A673 (cell line): ENCODE measurements at regions of chr19 and their contacts with region 1.

Region 1: DNA sequence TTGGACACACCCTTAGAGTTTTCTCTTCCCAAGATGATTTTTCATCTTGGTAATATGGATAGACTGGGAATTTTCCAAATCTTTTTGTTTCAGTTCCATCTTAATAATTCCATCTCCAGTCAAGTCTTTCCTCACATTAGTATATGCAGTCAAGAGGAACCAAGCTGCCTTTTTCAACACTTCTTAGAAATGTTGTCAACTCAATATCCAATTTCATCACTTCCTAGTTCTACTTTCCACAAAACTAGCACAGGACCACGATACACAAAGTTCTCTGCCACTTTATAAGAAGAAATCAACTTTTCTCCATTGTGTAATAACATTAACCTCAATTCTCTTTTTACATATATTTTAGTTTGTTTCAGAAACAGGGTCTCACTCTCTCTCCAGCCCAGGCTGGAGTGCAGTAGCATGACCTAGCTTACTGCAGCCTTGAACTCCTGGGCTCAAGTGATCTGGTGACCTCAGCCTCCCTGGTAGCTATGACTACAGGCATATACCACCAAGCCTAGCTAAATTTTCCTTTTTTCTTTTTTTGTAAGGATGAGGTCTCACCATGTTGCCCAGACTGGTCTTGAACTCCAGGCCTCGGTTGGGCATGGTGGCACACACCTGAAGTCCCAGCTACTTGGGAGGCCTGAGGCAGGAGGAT is 15.5 kb downstream of the ZNF443 start:
- DNase-seq: no peak
- H3K4me3 ChIP-seq: no peak overlapping the region
- H3K27ac ChIP-seq: no peak overlapping the region
- H3K4me1 ChIP-seq: no peaks in the 10 kb centered on the region
- H3K27me3 ChIP-seq: no peaks in the 10 kb centered on the region
- CTCF ChIP-seq: no peak

Region 2: DNA sequence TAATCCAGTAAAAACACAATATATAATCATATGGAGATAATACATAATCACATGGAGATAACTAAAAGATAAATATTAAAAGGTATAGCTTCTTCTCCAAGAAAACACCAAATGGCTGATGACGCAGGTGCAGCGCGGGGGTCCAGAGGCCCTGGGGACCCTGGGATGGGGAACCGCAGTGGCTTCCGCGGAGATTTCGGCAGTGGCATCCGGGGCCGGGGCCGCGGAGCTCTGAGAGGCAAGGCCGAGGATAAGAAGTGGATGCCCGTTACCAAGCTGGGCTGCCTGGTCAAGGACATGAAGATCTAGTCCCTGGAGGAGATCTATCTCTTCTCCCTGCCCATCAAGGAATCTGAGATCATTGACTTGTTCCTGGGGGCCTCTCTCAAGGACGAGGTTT is 141.1 kb before region 1 on chr19:
- CTCF ChIA-PET with region 1: no interaction called
- POLR2A ChIA-PET with region 1: interaction called, 10 read pairs
- intact Hi-C with region 1: no loop called
- DNase-seq: no peak
- H3K4me3 ChIP-seq: no peak overlapping the region
- H3K27ac ChIP-seq: no peak overlapping the region
- H3K4me1 ChIP-seq: no peaks in the 10 kb centered on the region
- H3K27me3 ChIP-seq: no peaks in the 10 kb centered on the region
- CTCF ChIP-seq: no peak